SK-N-SH (cell line): ENCODE measurements at regions of chr3 and their contacts with region 1.

Region 1: GRCh38 chr3:185764163-185764979 is 60.5 kb downstream of the IGF2BP2 start:
- DNase-seq: no peak
- H3K4me3 ChIP-seq: no peak overlapping the region
- H3K27ac ChIP-seq: peak overlapping the region in 1 of 2 experiments; percentile 53; a peak in 2 of 4 replicates
- H3K4me1 ChIP-seq: peaks cover 0 to 55% of the 10 kb centered on the region in 2 experiments
- H3K27me3 ChIP-seq: no peaks in the 10 kb centered on the region
- CTCF ChIP-seq: no peak
- EP300 ChIP-seq: no peak
- RAD21 ChIP-seq: no peak

Region 2: DNA sequence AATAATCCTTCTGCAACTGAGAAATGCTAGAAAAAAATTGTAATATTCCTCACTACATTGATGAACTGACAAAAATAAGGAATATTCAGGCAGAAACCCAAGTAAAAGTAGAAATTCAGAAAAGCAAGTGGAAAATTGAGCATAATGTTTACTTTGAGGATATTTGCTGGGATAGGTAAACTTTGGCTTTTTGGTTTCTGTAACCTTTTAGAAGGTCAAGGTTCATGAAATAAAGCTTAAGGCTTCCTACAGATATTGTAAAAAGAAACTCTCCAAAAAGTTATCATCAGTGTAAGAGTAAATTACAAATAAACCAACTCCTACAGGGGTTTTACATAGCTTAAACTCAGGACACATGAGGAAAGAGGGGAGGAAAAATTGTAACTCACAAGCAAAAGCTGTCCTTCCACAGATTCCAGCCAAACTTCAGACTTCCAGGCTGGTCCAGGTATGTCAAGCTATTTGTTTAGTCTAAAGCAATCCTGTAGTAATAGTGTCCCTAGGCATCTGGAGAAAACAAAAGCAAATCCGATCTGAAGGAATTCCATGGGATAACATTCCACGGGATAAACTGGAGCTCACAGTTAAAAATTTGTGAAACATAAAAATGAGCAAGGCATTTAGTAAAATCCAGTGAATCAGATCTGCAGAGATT is 632.6 kb before region 1 on chr3:
- CTCF ChIA-PET with region 1: no interaction called
- POLR2A ChIA-PET with region 1: no interaction called
- DNase-seq: no peak
- H3K4me3 ChIP-seq: no peak overlapping the region
- H3K27ac ChIP-seq: no peak overlapping the region
- H3K4me1 ChIP-seq: no peaks in the 10 kb centered on the region
- H3K27me3 ChIP-seq: no peaks in the 10 kb centered on the region; the same call in 1 of the 2 replicates
- CTCF ChIP-seq: no peak
- EP300 ChIP-seq: no peak
- RAD21 ChIP-seq: no peak

Region 3: DNA sequence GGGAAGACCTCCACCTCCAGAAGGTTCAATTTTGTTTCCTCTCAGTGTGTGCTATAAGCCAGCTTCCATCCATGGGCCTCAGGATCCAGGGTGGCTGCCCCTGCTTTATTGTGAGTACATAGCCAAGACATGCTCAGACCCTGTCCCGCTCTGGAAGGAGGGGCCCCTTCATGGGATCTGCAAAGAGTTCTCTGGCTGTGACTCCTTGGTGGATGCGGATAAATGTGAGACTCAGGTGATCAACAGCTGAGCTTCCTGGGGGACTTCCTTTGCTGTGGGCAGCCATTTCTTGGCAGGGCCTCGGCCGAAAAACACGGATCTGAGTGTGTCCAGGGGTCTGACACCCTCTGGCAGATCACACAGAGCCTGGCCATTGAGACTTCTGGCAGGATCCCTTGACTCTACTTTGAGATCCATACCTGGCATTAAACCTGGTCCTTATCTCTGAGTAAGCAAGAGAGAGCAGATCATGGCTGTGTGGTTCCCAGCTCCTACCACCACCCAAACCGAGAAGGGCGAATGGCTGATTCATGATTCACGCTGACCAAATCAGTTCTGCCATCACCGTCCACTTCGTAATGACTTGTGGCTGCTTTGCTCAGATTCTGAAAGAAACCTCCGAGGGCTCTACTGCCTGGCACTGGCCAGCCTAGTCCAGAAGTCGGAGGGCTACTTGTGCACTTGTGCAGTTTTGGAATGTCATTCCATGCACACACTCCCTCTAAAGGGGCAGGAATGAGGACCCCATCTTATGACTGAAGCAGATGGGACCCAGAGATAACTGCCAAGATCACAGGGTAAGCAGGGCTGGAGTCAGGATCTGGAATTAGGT is 110.2 kb before region 1 on chr3:
- CTCF ChIA-PET with region 1: interaction called, 194 read pairs
- POLR2A ChIA-PET with region 1: no interaction called
- DNase-seq: no peak
- H3K4me3 ChIP-seq: no peak overlapping the region
- H3K27ac ChIP-seq: no peak overlapping the region
- H3K4me1 ChIP-seq: peaks cover 0 to 31% of the 10 kb centered on the region in 2 experiments; a peak in 3 of 4 replicates
- H3K27me3 ChIP-seq: no peaks in the 10 kb centered on the region
- CTCF ChIP-seq: no peak
- EP300 ChIP-seq: no peak
- RAD21 ChIP-seq: no peak

Region 4: DNA sequence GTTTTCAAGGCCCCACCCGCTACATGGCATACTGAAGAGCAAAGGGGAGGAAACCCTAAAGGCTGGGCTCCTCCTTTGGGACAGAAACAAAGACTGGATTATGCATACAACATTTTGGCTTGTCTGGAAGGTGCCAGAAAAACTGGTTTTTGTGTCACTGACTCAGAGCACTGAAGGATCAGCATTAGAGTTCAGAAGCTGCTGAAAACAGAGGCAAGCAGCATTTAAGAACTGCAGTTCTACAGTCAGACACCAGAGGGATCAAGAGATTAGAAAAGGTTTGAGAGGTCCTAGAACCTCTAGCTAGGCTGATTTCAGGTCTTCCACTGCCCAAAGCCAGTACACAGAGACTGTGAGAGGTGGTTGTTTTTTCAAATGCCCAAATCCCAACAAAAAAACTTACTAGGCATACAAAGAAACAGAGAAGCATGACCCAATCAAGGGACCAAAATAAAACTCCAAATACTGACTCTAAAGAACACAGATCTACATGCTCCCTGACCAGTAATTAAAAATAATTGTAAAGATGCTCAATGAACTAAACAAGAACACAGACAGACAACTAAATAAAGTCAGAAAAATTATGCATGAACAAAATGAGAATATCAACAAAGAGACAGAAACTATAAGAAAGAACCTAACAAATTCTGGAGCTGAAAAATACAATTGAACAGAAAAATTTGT is 87.1 kb before region 1 on chr3:
- CTCF ChIA-PET with region 1: interaction called, 54 read pairs
- POLR2A ChIA-PET with region 1: no interaction called
- DNase-seq: peak; percentile 56
- H3K4me3 ChIP-seq: no peak overlapping the region
- H3K27ac ChIP-seq: peak overlapping the region in 1 of 2 experiments; percentile 5; a peak in 1 of 4 replicates
- H3K4me1 ChIP-seq: no peaks in the 10 kb centered on the region
- H3K27me3 ChIP-seq: no peaks in the 10 kb centered on the region
- CTCF ChIP-seq: peak; percentile 81
- EP300 ChIP-seq: no peak
- RAD21 ChIP-seq: peak; percentile 68

Region 5: DNA sequence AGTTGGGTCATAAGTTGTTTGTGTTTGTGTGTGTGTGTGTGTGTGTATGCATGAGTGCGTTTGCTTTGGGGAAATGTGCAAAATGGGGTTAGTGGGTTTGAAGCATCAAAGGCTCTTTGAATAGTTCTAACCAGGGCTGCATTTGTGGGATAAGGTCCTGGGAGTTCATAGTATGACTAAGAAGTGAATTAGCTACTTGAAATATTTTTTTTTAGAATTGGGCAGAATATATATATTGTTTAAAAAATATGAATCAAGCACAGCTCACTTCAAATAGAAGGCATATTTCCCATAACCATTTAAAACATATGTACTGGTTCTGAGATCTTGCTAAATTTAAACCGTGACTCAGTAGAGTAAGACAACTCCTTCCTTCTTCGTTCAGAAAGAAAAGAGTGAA is 17.4 kb after region 1 on chr3:
- CTCF ChIA-PET with region 1: interaction called, 70 read pairs
- POLR2A ChIA-PET with region 1: no interaction called
- DNase-seq: no peak
- H3K4me3 ChIP-seq: 0 out of 4 replicates have a peak overlapping the region, but pooled peaks of 1 of the 2 experiments have one; percentile 6
- H3K27ac ChIP-seq: peak overlapping the region in 1 of 2 experiments; percentile 87; a peak in 3 of 4 replicates
- H3K4me1 ChIP-seq: peaks cover 0 to 12% of the 10 kb centered on the region in 2 experiments; a peak in 1 of 4 replicates
- H3K27me3 ChIP-seq: no peaks in the 10 kb centered on the region
- CTCF ChIP-seq: no peak
- EP300 ChIP-seq: peak in 1 of 2 experiments; percentile 44; a peak in 2 of 4 replicates
- RAD21 ChIP-seq: no peak